ENCODE measurements at regions of chr11 and their contacts with region 1.

Region 1: DNA sequence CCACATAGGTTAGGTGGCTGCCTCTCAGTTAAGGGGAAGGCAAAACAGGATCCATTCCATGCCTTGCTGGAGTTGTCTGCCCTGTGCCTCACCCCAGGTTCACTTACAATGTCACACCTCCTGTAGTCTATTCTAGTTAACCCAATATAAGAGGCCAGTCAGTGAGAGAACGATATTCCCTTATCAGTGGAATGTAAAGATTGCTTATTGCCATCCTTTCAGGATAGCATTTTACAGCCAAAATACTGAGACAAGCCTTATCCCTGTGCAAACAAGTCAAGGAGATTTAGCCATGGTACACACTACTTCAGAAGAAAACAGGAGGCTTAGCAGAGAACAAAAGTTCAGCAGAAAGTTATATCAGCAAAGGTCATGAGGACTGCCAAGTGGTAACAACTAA is 5.5 kb downstream of the CYP2R1 start:
- DNase-seq: no peak
- H3K4me3 ChIP-seq: no peak overlapping the region
- H3K27ac ChIP-seq: no peak overlapping the region
- H3K4me1 ChIP-seq: peaks cover 12% of the 10 kb centered on the region
- CTCF ChIP-seq: no peak

Region 2: DNA sequence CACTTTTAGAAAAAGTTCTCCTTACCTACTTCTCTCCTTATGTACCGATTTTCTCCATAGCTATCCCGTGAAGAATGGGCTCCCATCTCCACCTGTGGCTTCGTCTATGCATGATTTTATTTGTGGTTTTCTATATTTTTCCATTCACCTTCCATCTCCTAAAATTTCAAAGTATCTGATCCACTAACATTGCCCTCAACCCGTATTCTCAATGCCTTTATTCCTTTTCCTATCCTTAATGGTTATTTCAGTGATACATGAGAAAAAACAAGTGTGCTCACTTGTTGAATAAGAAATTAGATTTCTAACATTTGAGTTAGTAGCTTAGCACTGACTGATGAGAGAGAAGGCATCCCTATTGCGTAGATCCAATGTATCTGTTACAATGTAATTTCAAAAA is 11.3 kb before region 1 on chr11:
- CTCF ChIA-PET with region 1: no interaction called
- POLR2A ChIA-PET with region 1: no interaction called
- intact Hi-C with region 1: no loop called
- DNase-seq: no peak
- H3K4me3 ChIP-seq: no peak overlapping the region
- H3K27ac ChIP-seq: no peak overlapping the region
- H3K4me1 ChIP-seq: no peaks in the 10 kb centered on the region
- CTCF ChIP-seq: no peak

Region 3: DNA sequence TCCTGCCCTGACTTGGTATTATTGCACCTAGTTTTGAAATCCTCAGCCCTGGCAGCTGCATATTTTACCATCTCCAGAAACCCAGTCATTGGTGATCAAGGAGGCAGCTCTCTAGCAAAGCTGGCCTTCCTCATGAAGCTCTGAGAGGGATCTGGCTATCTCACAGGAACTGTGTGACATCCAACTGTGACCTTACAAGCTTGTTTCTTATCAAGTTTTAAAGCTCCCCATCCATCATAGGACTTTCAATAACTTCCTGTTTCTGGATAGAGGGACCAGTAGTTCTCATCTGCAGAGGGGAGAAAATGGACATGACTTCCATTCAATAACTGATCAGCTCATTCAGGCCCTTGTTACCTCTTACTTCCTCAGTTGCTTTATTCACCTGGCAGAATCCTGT is 67.4 kb after region 1 on chr11:
- CTCF ChIA-PET with region 1: no interaction called
- POLR2A ChIA-PET with region 1: no interaction called
- intact Hi-C with region 1: no loop called
- DNase-seq: no peak
- H3K4me3 ChIP-seq: no peak overlapping the region
- H3K27ac ChIP-seq: no peak overlapping the region
- H3K4me1 ChIP-seq: no peaks in the 10 kb centered on the region
- CTCF ChIP-seq: no peak

Region 4: GRCh38 chr11:16347928-16348685 is 1461.6 kb after region 1 on chr11:
- CTCF ChIA-PET with region 1: no interaction called
- POLR2A ChIA-PET with region 1: no interaction called
- intact Hi-C with region 1: no loop called
- DNase-seq: no peak
- H3K4me3 ChIP-seq: no peak overlapping the region
- H3K27ac ChIP-seq: no peak overlapping the region
- H3K4me1 ChIP-seq: no peaks in the 10 kb centered on the region
- CTCF ChIP-seq: no peak

Region 5: GRCh38 chr11:16738193-16738946 is 1851.9 kb after region 1 on chr11 and contains the start of gene C11orf58:
- CTCF ChIA-PET with region 1: no interaction called
- POLR2A ChIA-PET with region 1: no interaction called
- intact Hi-C with region 1: loop called (anchors 10 kb)
- DNase-seq: peak; percentile 97
- H3K4me3 ChIP-seq: peak within 1 kb of the TSS; percentile 79
- H3K27ac ChIP-seq: peak within 1 kb of the TSS; percentile 65
- H3K4me1 ChIP-seq: peaks cover 35% of the 10 kb centered on the region
- CTCF ChIP-seq: no peak
- total RNA-seq, gene C11orf58: 118 and 168 TPM in 2 replicates

Measured in OCI-LY7 (cell line).